MCF 10A (cell line): ENCODE measurements at regions of chr1 and their contacts with region 1.

Region 1: GRCh38 chr1:145858894-145859490 is at the start of gene PIAS3:
- DNase-seq: peak; percentile 97
- H3K4me3 Mint-ChIP-seq: peak within 1 kb of the TSS; percentile 99
- H3K27ac Mint-ChIP-seq: peak within 1 kb of the TSS; percentile 86
- H3K4me1 Mint-ChIP-seq: peaks cover 21% of the 10 kb centered on the region
- H3K27me3 Mint-ChIP-seq: no peaks in the 10 kb centered on the region
- CTCF ChIP-seq: no peak
- total RNA-seq, gene PIAS3: 34.3 and 36.9 TPM in 2 replicates

Region 2: GRCh38 chr1:145823565-145824498 is 35.2 kb before region 1 on chr1 and contains the starts of genes POLR3C and RNF115:
- CTCF ChIA-PET with region 1: interaction called, 21 read pairs
- POLR2A ChIA-PET with region 1: interaction called, 92 read pairs
- intact Hi-C with region 1: no loop called
- DNase-seq: peak; percentile 95
- H3K4me3 Mint-ChIP-seq: peak within 1 kb of the TSS; percentile 90
- H3K27ac Mint-ChIP-seq: peak within 1 kb of the TSS; percentile 94
- H3K4me1 Mint-ChIP-seq: peaks cover 6% of the 10 kb centered on the region
- H3K27me3 Mint-ChIP-seq: no peaks in the 10 kb centered on the region
- CTCF ChIP-seq: no peak
- total RNA-seq, gene POLR3C: 67.9 and 96.8 TPM in 2 replicates
- total RNA-seq, gene RNF115: 16.8 and 19.5 TPM in 2 replicates

Region 3: DNA sequence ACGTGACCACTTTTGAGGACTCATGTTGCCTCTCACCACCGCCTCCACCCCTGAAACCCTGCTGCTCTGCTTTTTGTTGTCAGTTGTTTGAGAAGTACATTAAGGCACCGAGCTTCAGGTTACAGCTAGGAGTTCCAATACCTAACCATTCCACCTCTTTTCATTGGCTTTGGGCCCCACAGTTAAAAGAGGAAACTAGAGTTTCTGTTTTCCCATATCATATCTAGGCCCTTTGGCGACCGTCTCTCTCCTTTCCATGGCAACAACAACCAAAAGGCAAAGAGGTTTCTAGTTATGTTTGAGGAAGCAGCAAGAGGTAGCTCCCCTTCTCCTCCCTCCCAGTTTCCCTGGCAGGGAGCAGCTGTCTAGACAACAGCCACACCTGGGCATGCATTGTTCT is 20.8 kb after region 1 on chr1:
- CTCF ChIA-PET with region 1: interaction called, 26 read pairs
- POLR2A ChIA-PET with region 1: interaction called, 39 read pairs
- intact Hi-C with region 1: no loop called
- DNase-seq: no peak
- H3K4me3 Mint-ChIP-seq: no peak overlapping the region
- H3K27ac Mint-ChIP-seq: no peak overlapping the region
- H3K4me1 Mint-ChIP-seq: peaks cover 28% of the 10 kb centered on the region
- H3K27me3 Mint-ChIP-seq: peaks cover 2% of the 10 kb centered on the region
- CTCF ChIP-seq: no peak

Region 4: DNA sequence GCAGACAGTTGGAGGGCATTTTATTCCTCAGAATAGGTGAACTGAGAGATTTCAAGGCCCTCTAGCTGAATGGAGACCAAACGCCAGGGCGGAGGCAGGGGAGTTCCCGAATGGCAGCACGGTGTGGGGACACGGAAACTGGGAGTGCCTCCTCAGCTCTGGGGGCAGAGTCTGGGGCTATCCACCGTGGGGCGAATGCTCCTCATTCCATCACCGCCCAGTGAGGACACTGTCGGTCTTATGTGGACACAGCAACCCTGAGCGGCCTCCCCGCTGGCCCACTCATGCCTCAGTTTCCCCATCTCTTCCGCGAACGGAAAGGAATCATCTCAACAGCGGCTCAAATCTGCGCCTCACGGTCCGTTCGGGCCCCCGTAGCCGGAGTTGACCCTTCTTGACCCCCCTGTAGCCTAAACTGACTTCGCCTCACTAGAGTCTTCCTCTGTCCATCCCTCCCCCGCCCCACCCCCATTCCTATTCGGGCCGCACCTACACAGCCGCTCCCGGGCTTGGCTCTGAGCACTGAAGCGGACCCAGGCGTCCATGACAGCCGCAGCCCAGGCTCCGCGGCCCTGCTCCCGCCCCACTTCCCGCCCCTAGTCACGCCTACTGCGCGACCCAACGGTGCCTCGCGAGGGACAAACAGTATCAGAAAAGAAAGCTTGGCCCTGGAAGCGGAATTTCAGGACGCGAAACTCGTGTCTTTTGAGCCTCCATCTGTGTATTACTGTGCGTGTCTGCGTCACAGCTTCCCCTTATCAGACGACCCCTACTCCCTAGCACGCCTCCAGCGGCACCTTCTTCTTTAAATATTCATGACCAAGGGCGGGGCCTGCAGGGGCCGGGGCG is 59.4 kb after region 1 on chr1 and contains the start of gene PEX11B:
- CTCF ChIA-PET with region 1: interaction called, 6 read pairs
- POLR2A ChIA-PET with region 1: interaction called, 59 read pairs
- intact Hi-C with region 1: no loop called
- DNase-seq: peak; percentile 92
- H3K4me3 Mint-ChIP-seq: peak within 1 kb of the TSS; percentile 94
- H3K27ac Mint-ChIP-seq: peak within 1 kb of the TSS; percentile 99
- H3K4me1 Mint-ChIP-seq: peaks cover 43% of the 10 kb centered on the region
- H3K27me3 Mint-ChIP-seq: no peaks in the 10 kb centered on the region
- CTCF ChIP-seq: no peak
- total RNA-seq, gene PEX11B: 35.5 and 36.2 TPM in 2 replicates

Region 5: DNA sequence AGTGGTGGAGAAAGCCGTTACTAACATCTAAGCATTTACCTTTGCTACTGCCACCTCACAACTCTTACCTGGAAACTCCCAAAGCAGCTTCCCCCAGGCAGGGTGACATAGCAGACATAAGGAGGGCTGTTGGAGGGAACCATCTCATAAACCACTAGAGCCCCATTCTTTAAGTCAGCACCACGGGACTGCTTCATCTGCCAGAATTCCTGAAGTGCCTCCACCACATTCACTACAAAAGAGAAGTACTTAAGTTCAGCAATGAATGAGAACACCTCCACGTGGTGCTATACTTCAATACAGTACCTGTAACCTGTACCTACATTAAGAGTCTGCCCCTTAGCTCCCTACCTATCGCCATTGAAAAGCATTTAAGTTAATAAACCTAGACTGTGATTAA is 88.6 kb after region 1 on chr1:
- CTCF ChIA-PET with region 1: no interaction called
- POLR2A ChIA-PET with region 1: no interaction called
- intact Hi-C with region 1: no loop called
- DNase-seq: no peak
- H3K4me3 Mint-ChIP-seq: no peak overlapping the region
- H3K27ac Mint-ChIP-seq: no peak overlapping the region
- H3K4me1 Mint-ChIP-seq: peaks cover 5% of the 10 kb centered on the region
- H3K27me3 Mint-ChIP-seq: no peaks in the 10 kb centered on the region
- CTCF ChIP-seq: no peak

Region 6: DNA sequence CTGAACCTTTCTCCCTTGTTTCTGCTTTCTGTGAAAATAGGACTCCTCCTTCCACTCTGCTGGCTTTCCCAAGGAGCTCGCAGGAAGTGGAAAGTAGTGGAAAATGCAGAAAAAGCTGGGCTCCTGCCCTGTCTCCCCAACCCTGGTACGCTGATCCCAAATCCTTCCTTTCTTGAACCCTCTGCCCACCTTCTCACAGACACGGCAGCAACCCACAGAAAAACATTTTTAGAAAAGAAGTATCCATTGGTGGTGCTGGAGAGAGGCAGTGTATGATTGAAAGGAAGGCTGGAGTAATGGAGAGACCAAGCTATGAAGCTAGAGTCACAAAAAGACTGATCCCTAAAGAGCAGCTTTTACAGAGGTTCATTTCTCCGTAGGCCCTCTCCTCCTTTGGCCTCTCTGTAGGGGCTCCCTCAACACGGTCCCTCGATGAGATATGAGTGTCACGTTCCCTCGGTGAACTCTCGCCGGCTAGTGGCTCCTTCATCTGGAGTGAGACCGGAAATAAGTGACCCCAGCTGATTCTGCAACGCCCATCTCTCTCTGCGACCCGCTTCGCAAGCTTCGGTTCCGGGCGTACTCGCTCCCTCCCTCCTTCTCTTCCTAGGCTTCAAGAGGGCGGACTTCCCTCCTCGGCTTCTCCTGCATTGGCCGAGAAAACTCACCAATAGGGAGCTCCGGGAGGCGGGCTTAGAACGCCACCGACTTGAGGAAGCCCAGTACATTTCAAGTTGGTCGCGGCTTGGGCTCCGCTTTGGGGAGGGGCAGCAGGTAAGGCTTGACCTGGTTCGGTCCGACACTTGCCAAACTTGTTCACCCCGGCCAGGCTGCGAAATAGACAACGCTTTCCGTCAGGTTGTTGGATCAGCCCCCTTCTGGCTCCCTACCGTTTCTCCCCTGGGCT is 105.3 kb after region 1 on chr1 and contains the starts of genes ANKRD34A and POLR3GL:
- CTCF ChIA-PET with region 1: interaction called, 7 read pairs
- POLR2A ChIA-PET with region 1: interaction called, 92 read pairs
- intact Hi-C with region 1: no loop called
- DNase-seq: peak; percentile 98
- H3K4me3 Mint-ChIP-seq: peak within 1 kb of the TSS; percentile 92
- H3K27ac Mint-ChIP-seq: peak within 1 kb of the TSS; percentile 96
- H3K4me1 Mint-ChIP-seq: peaks cover 42% of the 10 kb centered on the region
- H3K27me3 Mint-ChIP-seq: no peaks in the 10 kb centered on the region
- CTCF ChIP-seq: no peak
- total RNA-seq, gene ANKRD34A: 2.6 and 3.1 TPM in 2 replicates
- total RNA-seq, gene POLR3GL: 17.6 and 20.9 TPM in 2 replicates

Region 7: GRCh38 chr1:146007506-146008133 is 148.6 kb after region 1 on chr1:
- CTCF ChIA-PET with region 1: interaction called, 8 read pairs
- POLR2A ChIA-PET with region 1: interaction called, 12 read pairs
- intact Hi-C with region 1: loop called (anchors 5 kb)
- DNase-seq: no peak
- H3K4me3 Mint-ChIP-seq: peak overlapping the region; percentile 64
- H3K27ac Mint-ChIP-seq: peak overlapping the region; percentile 97
- H3K4me1 Mint-ChIP-seq: peaks cover 33% of the 10 kb centered on the region
- H3K27me3 Mint-ChIP-seq: no peaks in the 10 kb centered on the region
- CTCF ChIP-seq: no peak

Region 8: GRCh38 chr1:147700042-147701006 is 1841.3 kb after region 1 on chr1:
- CTCF ChIA-PET with region 1: no interaction called
- POLR2A ChIA-PET with region 1: no interaction called
- intact Hi-C with region 1: no loop called
- DNase-seq: peak; percentile 81
- H3K4me3 Mint-ChIP-seq: no peak overlapping the region
- H3K27ac Mint-ChIP-seq: no peak overlapping the region
- H3K4me1 Mint-ChIP-seq: peaks cover 7% of the 10 kb centered on the region
- H3K27me3 Mint-ChIP-seq: no peaks in the 10 kb centered on the region
- CTCF ChIP-seq: peak; percentile 96